Activated B cell treated with CpG ODN at 0.5 μM for 24 hours (primary cell): ENCODE measurements at regions of chr16 and their contacts with region 1.

Region 1: DNA sequence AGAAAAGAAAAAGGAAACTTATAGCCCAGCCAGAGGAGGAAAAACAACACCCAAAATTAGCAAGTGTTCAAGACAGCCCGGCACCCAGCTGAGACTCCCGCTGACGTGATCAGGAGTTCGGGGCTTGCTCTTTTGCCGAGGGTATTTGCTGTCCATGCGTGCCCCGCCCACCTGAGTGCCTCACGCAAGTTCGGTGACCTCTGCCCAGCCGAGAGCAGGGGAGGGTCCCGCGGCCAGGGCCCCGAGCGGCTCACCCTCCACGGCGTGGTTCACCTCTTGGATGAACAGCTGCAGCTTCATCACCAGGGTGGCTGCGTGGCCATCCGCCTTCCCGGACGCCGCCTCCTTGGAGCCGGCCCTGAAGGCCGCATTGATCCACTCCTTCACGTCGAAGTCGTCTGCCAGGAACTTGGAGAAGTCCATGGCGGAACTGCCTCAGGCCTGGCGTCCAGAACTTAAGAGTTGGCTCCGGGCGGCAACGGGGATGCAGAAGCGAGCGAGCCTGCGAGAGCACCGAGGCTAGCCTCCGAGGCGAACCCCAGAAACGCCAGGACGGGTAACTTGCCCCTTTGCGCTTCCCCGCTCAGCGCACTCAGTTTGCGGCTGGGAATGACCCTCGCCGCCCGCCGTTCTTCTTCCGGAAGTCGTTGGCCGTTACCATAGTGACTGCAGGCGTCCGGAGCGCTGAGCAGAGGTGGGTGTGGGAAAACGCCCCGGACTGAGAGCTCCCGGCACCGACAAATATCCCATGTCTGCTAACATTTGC is at the start of gene COG7:
- DNase-seq: peak; percentile 86
- ATAC-seq: peak; percentile 88
- H3K4me3 Mint-ChIP-seq: peak within 1 kb of the TSS; percentile 93
- H3K27ac Mint-ChIP-seq: peak within 1 kb of the TSS; percentile 83
- H3K4me1 Mint-ChIP-seq: peaks cover 20% of the 10 kb centered on the region
- H3K27me3 Mint-ChIP-seq: no peaks in the 10 kb centered on the region
- CTCF ChIP-seq: no peak
- total RNA-seq, gene COG7: 19.3 and 20.2 TPM in 2 replicates

Region 2: GRCh38 chr16:23149349-23149996 is 303.3 kb before region 1 on chr16 and contains the start of gene USP31:
- CTCF ChIA-PET with region 1: no interaction called
- POLR2A ChIA-PET with region 1: no interaction called
- intact Hi-C with region 1: loop called (anchors 1 kb)
- DNase-seq: peak; percentile 82
- ATAC-seq: peak; percentile 96
- H3K4me3 Mint-ChIP-seq: peak within 1 kb of the TSS; percentile 91
- H3K27ac Mint-ChIP-seq: peak within 1 kb of the TSS; percentile 81
- H3K4me1 Mint-ChIP-seq: peaks cover 11% of the 10 kb centered on the region
- H3K27me3 Mint-ChIP-seq: peaks cover 3% of the 10 kb centered on the region
- CTCF ChIP-seq: no peak
- total RNA-seq, gene USP31: 3.6 and 4.6 TPM in 2 replicates

Region 3: DNA sequence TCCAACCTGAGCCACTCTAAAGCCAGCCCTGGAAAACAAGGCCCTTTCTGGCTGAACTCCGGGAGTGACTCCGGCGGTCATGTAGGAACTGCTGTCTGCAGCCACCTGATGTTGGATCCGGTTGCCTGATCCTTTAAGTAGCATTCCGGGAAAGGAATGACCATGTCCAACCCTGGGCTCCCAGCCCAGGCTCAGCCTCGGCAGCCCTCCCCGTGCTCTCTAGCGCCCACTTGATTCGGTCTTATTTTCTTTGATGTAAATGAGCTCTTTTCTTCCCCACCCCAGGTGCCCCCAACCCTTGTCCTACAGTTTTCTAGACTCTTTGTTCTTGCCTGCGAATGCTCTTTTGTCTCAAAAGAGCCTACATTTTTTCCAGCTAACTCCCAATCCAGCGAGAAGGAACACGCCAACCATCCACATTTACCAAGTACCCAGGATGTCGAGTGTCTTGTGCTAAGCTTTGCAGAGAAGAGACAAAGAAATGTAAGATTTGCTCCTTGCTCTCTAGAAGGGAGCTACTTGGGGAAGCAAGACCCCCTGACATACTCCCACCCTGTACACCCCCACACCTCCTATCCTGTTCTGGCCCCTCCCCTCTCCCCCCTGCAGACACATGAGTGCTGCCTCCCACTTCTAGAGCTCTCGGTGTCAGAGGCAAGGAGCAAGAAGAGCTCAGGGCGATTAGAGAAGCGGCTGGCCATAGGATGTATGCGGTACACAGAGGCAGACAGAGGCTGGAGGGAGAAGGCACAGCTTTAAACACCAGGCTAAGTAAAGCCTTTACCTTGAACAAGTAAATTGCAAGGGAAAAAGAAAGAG is 53.6 kb before region 1 on chr16:
- CTCF ChIA-PET with region 1: no interaction called
- POLR2A ChIA-PET with region 1: no interaction called
- intact Hi-C with region 1: no loop called
- DNase-seq: no peak
- ATAC-seq: no peak
- H3K4me3 Mint-ChIP-seq: no peak overlapping the region
- H3K27ac Mint-ChIP-seq: no peak overlapping the region
- H3K4me1 Mint-ChIP-seq: no peaks in the 10 kb centered on the region
- H3K27me3 Mint-ChIP-seq: no peaks in the 10 kb centered on the region
- CTCF ChIP-seq: no peak

Region 4: DNA sequence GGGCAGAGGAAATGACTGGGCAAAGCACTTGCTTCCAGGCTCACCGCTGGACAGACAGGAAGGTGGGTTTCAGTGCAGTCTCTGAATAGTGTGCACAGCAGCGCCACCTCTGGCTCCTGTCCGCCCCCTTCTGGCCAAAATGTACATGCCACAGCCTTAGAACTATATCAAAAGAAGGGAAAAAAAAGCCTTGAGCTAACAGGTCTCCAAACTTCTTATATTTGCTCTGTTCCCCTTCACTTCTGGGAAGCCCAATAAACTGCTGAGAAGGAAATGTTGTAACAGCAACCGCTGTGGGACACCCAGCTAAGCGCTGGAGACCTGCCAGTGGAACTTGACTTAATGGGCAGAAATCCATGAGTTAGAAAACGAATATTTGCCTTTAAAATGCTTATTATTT is 17.3 kb before region 1 on chr16:
- CTCF ChIA-PET with region 1: interaction called, 18 read pairs
- POLR2A ChIA-PET with region 1: no interaction called
- intact Hi-C with region 1: no loop called
- DNase-seq: peak; percentile 41
- ATAC-seq: peak; percentile 92
- H3K4me3 Mint-ChIP-seq: no peak overlapping the region
- H3K27ac Mint-ChIP-seq: no peak overlapping the region
- H3K4me1 Mint-ChIP-seq: peaks cover 8% of the 10 kb centered on the region
- H3K27me3 Mint-ChIP-seq: no peaks in the 10 kb centered on the region
- CTCF ChIP-seq: peak; percentile 75

Region 5: DNA sequence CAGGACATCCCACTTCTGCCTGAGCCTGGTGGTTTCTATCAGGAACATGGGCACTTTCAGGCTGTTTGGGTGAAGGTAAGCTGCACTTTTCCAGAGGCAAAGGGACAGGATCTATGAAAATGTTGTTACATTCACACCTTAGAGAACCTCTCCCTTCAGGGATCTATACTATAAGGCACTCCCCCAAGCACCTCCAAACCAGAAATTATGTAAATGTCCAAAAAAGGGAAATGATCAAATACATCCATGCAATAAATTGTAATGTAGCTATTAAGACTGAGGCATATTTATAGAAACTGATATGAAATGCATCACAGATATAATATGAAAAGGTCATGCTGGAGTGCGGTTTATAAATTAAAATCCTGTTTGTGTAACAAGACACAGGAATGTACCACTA is 23.5 kb after region 1 on chr16:
- CTCF ChIA-PET with region 1: no interaction called
- POLR2A ChIA-PET with region 1: no interaction called
- intact Hi-C with region 1: no loop called
- DNase-seq: no peak
- ATAC-seq: peak; percentile 23
- H3K4me3 Mint-ChIP-seq: no peak overlapping the region
- H3K27ac Mint-ChIP-seq: peak overlapping the region; percentile 85
- H3K4me1 Mint-ChIP-seq: peaks cover 19% of the 10 kb centered on the region
- H3K27me3 Mint-ChIP-seq: no peaks in the 10 kb centered on the region
- CTCF ChIP-seq: no peak

Region 6: GRCh38 chr16:23494188-23494587 is 41.4 kb after region 1 on chr16:
- CTCF ChIA-PET with region 1: no interaction called
- POLR2A ChIA-PET with region 1: no interaction called
- intact Hi-C with region 1: no loop called
- DNase-seq: no peak
- ATAC-seq: no peak
- H3K4me3 Mint-ChIP-seq: no peak overlapping the region
- H3K27ac Mint-ChIP-seq: peak overlapping the region; percentile 61
- H3K4me1 Mint-ChIP-seq: peaks cover 41% of the 10 kb centered on the region
- H3K27me3 Mint-ChIP-seq: no peaks in the 10 kb centered on the region
- CTCF ChIP-seq: no peak

Region 7: GRCh38 chr16:23504451-23505179 is 51.9 kb after region 1 on chr16:
- CTCF ChIA-PET with region 1: no interaction called
- POLR2A ChIA-PET with region 1: interaction called, 4 read pairs
- intact Hi-C with region 1: loop called (anchors 5 kb)
- DNase-seq: peak; percentile 42
- ATAC-seq: peak; percentile 63
- H3K4me3 Mint-ChIP-seq: peak overlapping the region; percentile 90
- H3K27ac Mint-ChIP-seq: peak overlapping the region; percentile 95
- H3K4me1 Mint-ChIP-seq: peaks cover 97% of the 10 kb centered on the region
- H3K27me3 Mint-ChIP-seq: no peaks in the 10 kb centered on the region
- CTCF ChIP-seq: no peak

Region 8: DNA sequence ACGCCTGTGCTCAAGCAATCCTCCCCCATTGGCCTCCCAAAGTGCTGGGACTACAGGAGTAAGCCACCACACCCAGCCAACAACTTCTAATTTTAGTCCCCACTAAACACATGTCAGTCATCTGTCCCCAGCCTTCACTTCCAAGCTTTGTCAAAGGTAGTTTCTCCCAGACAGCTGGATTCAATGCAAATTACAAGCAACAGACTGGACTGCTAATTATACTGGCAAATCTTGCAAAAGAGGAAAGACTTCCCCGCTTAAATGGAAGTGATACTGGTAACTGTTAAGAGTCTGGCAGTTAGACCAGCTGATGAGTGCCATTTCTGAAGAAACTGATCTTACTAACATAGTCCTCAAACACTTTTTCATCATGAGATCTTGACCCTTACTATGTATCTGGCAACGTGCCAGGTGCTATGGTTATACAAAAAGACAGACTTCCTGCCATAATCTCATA is 65.7 kb after region 1 on chr16:
- CTCF ChIA-PET with region 1: no interaction called
- POLR2A ChIA-PET with region 1: interaction called, 3 read pairs
- intact Hi-C with region 1: loop called (anchors 2 kb)
- DNase-seq: no peak
- ATAC-seq: peak; percentile 59
- H3K4me3 Mint-ChIP-seq: peak overlapping the region; percentile 64
- H3K27ac Mint-ChIP-seq: peak overlapping the region; percentile 86
- H3K4me1 Mint-ChIP-seq: peaks cover 68% of the 10 kb centered on the region
- H3K27me3 Mint-ChIP-seq: no peaks in the 10 kb centered on the region
- CTCF ChIP-seq: no peak

Region 9: GRCh38 chr16:23595951-23596720 is 143.4 kb after region 1 on chr16 and contains the start of gene NDUFAB1:
- CTCF ChIA-PET with region 1: interaction called, 5 read pairs
- POLR2A ChIA-PET with region 1: no interaction called
- intact Hi-C with region 1: loop called (anchors 2 kb)
- DNase-seq: peak; percentile 95
- ATAC-seq: peak; percentile 99
- H3K4me3 Mint-ChIP-seq: peak within 1 kb of the TSS; percentile 88
- H3K27ac Mint-ChIP-seq: peak within 1 kb of the TSS; percentile 65
- H3K4me1 Mint-ChIP-seq: peaks cover 28% of the 10 kb centered on the region
- H3K27me3 Mint-ChIP-seq: no peaks in the 10 kb centered on the region
- CTCF ChIP-seq: peak; percentile 89
- total RNA-seq, gene NDUFAB1: 68.4 and 74.5 TPM in 2 replicates